Heart right ventricle (tissue), 16 donors: ENCODE measurements at regions of chr20 and their contacts with region 1.

Region 1: GRCh38 chr20:1212607-1213396 is 9.5 kb downstream of the C20orf202 start:
- DNase-seq: peak; percentile 55 to 72
- ATAC-seq: peak; percentile 73 to 93 (median 84)
- H3K4me3 ChIP-seq: no peak overlapping the region
- H3K27ac ChIP-seq: no peak overlapping the region
- H3K4me1 ChIP-seq: peaks cover 0 to 7% (median 0%) of the 10 kb centered on the region in 9 donors
- H3K27me3 ChIP-seq: peaks cover 0 to 17% (median 4%) of the 10 kb centered on the region in 7 donors
- CTCF ChIP-seq: peak; percentile 42 to 86 (median 81)

Region 2: GRCh38 chr20:815914-816606 is 396.7 kb before region 1 on chr20:
- intact Hi-C with region 1: loop called in 8 of 10 experiments (anchors 1 to 10 kb)
- DNase-seq: peak; percentile 43 to 51
- ATAC-seq: peak in 7 of 8 donors; percentile 25 to 66 (median 48)
- H3K4me3 ChIP-seq: no peak overlapping the region
- H3K27ac ChIP-seq: no peak overlapping the region
- H3K4me1 ChIP-seq: peaks cover 0 to 7% (median 0%) of the 10 kb centered on the region in 9 donors
- H3K27me3 ChIP-seq: peaks cover 0 to 40% (median 11%) of the 10 kb centered on the region in 7 donors
- CTCF ChIP-seq: peak; percentile 93 to 99 (median 97)

Region 3: DNA sequence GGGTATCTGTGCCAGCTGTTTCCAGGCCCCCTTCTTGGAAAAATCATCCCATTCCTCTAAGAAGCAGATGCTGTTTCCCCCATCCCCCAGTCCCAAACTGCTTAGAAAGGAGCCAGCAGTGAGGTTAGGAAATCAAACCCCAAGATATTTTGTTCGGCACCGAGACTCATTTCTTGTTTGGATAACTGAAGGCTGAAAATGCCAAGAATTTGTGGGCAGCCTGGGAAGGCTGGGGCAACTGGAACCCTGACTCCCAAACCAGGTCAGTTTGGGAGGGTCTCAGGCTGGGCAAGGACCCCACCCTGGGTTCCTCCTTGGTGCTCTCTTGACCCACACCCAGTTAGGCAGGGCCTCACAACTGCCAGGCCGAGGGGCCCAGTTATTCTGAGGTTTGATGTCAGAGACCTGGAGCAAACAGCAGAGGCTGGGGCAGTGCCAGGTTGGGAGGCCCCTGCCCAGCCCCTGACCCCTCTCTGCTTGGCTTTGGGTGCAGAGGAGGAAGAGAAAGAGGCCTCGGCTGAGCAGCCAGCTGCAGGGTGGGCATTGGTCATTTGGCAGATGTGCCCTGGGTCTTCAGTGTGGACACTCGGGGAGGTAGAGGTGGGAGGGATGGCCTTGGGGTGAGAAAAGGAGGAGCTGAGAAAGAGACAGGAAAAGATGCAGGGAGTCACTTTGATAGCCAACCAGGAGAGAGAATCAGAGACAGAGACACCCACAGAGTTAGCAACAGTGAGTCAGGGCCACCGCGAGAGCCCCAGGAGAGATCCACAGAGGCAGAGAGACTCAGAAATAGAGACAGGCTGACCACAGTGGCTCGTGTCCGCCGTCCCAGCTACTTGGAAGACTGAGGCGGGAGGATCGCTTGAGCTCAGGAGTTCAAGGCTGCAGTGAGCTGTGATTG is 301.7 kb before region 1 on chr20:
- intact Hi-C with region 1: no loop called
- DNase-seq: no peak
- ATAC-seq: peak in 2 of 8 donors; percentile 36 to 44
- H3K4me3 ChIP-seq: no peak overlapping the region
- H3K27ac ChIP-seq: peak overlapping the region in 3 of 10 donors; percentile 10 to 44 (median 31)
- H3K4me1 ChIP-seq: peaks cover 0 to 20% (median 6%) of the 10 kb centered on the region in 9 donors
- H3K27me3 ChIP-seq: peaks cover 0 to 31% (median 15%) of the 10 kb centered on the region in 7 donors
- CTCF ChIP-seq: no peak

Region 4: GRCh38 chr20:967796-968742 is 244.7 kb before region 1 on chr20:
- intact Hi-C with region 1: loop called in 1 of 10 experiments (anchors 10 kb)
- DNase-seq: no peak
- ATAC-seq: no peak
- H3K4me3 ChIP-seq: no peak overlapping the region
- H3K27ac ChIP-seq: no peak overlapping the region
- H3K4me1 ChIP-seq: no peaks in the 10 kb centered on the region
- H3K27me3 ChIP-seq: peaks cover 0 to 49% (median 16%) of the 10 kb centered on the region in 7 donors
- CTCF ChIP-seq: no peak

Region 5: GRCh38 chr20:1118336-1119127 is 94.3 kb before region 1 on chr20 and contains the start of gene PSMF1:
- intact Hi-C with region 1: loop called in 2 of 10 experiments (anchors 5 to 10 kb)
- DNase-seq: peak; percentile 93 to 95
- ATAC-seq: peak; percentile 98 to 99 (median 99)
- H3K4me3 ChIP-seq: peak within 1 kb of the TSS; percentile 72 to 100 (median 92)
- H3K27ac ChIP-seq: peak within 1 kb of the TSS in 9 of 10 donors; percentile 64 to 91 (median 85)
- H3K4me1 ChIP-seq: peaks cover 15 to 56% (median 50%) of the 10 kb centered on the region in 9 donors
- H3K27me3 ChIP-seq: no peaks in the 10 kb centered on the region
- CTCF ChIP-seq: peak in 6 of 9 donors; percentile 10 to 34 (median 24)
- total RNA-seq, gene PSMF1: 105 to 181 (median 129) TPM

Region 6: DNA sequence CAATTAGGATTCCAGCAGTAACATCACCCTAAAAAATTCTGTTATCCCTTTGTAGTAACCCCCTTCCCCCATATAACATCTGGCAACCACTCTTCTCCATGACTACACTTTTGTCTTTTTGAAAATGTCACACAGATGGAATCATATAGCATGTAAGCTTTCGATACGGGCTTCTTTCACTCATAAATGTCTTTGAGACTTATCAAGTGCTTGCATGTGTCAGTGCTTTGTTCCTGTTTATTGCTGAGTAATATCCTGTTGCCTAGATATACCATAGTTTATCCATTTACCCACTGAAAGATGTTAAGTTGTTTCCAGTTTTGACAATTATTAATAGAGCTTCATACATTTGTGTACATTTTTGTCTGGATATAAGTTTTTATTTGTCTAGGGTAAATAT is 42.9 kb after region 1 on chr20:
- intact Hi-C with region 1: no loop called
- DNase-seq: no peak
- ATAC-seq: no peak
- H3K4me3 ChIP-seq: no peak overlapping the region
- H3K27ac ChIP-seq: no peak overlapping the region
- H3K4me1 ChIP-seq: no peaks in the 10 kb centered on the region
- H3K27me3 ChIP-seq: peaks cover 0 to 53% (median 15%) of the 10 kb centered on the region in 7 donors
- CTCF ChIP-seq: no peak

Region 7: DNA sequence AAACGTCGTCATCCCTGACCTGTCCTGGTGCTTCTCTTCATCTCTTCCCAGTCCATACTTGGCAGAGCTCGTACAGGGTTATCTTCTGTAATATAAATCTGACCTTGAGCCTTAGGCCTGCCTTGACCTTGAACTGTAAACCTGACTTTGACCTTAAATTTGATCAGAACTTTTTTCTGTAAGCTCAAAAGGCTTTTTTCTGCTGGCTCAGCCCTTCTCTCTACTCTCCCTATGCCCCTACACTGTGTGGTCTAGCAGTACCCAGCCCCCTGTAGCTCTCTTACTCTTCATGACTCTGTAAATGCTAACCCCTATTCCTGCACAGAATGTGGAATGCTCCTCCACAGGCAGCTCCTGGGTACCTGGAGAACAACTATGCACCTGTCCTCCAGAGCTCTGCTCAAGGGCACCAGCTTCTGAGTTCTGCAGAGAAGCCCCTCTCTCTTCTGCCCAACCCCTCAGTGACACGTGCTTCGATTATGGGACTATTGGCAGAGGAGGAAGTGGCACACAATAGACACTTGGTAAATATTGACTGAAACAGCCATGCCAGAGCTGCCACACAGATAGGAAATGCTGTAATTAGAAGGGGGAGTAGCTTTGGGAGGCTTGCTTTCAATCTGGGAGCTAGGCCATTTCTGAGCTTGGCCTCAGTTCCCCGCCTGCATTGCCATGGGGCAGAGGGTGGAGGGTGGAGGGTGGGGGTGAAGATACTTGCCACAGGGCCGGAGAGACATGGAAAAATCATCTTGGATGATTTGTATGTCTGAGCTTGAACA is 68.7 kb after region 1 on chr20:
- intact Hi-C with region 1: no loop called
- DNase-seq: no peak
- ATAC-seq: peak; percentile 16 to 77 (median 70)
- H3K4me3 ChIP-seq: no peak overlapping the region
- H3K27ac ChIP-seq: peak overlapping the region in 8 of 10 donors; percentile 19 to 65 (median 51)
- H3K4me1 ChIP-seq: peaks cover 0 to 25% (median 13%) of the 10 kb centered on the region in 9 donors
- H3K27me3 ChIP-seq: no peaks in the 10 kb centered on the region
- CTCF ChIP-seq: no peak